ENCODE measurements at regions of chr12 and their contacts with region 1.

Region 1: GRCh38 chr12:22443379-22444316 is 100.7 kb downstream of the C2CD5 start:
- DNase-seq: peak; percentile 75
- ATAC-seq: peak; percentile 100
- H3K4me3 ChIP-seq: no peak overlapping the region
- H3K27ac ChIP-seq: no peak overlapping the region
- H3K4me1 ChIP-seq: no peaks in the 10 kb centered on the region
- H3K27me3 ChIP-seq: no peaks in the 10 kb centered on the region
- CTCF ChIP-seq: peak; percentile 77 to 85 (median 82)
- POLR2A ChIP-seq: no peak
- RAD21 ChIP-seq: peak; percentile 90

Region 2: DNA sequence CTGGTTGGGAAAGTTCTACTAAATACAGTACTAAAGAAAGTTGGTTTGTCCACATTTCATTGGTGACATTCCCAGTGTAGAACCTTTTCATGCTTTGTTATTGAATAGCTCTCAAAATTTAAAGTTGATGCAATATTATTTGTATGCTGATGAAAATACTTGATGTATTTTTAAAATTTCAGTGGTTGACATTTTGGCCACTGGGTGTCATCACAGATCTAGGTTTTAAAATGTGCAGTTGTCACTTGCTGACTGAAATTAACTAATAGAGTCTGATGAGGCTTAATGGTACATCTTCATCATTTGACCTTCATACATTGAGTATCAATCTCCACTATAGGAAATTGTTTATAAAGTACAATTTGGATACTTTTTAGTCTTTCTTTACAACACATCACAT is 360.5 kb before region 1 on chr12:
- CTCF ChIA-PET with region 1: interaction called, 12 read pairs
- POLR2A ChIA-PET with region 1: no interaction called
- RAD21 ChIA-PET with region 1: no interaction called
- intact Hi-C with region 1: loop called (anchors 1 kb)
- DNase-seq: peak; percentile 12
- ATAC-seq: peak; percentile 44; the same call in 1 of the 2 replicates
- H3K4me3 ChIP-seq: no peak overlapping the region
- H3K27ac ChIP-seq: no peak overlapping the region
- H3K4me1 ChIP-seq: no peaks in the 10 kb centered on the region
- H3K27me3 ChIP-seq: no peaks in the 10 kb centered on the region
- CTCF ChIP-seq: peak; percentile 13 to 59 (median 42); a peak in 4 of 6 replicates
- POLR2A ChIP-seq: no peak
- RAD21 ChIP-seq: peak; percentile 72

Region 3: GRCh38 chr12:22100958-22101748 is 342.5 kb before region 1 on chr12:
- CTCF ChIA-PET with region 1: interaction called, 13 read pairs
- POLR2A ChIA-PET with region 1: no interaction called
- RAD21 ChIA-PET with region 1: interaction called in 1 of 2 experiments, 3 read pairs
- intact Hi-C with region 1: loop called (anchors 1 kb)
- DNase-seq: peak; percentile 18
- ATAC-seq: peak; percentile 76
- H3K4me3 ChIP-seq: no peak overlapping the region
- H3K27ac ChIP-seq: no peak overlapping the region
- H3K4me1 ChIP-seq: no peaks in the 10 kb centered on the region
- H3K27me3 ChIP-seq: no peaks in the 10 kb centered on the region
- CTCF ChIP-seq: peak in 2 of 3 experiments; percentile 57 to 66; a peak in 4 of 6 replicates
- POLR2A ChIP-seq: no peak
- RAD21 ChIP-seq: peak; percentile 60

Region 4: GRCh38 chr12:22481547-22482104 is 38.0 kb after region 1 on chr12:
- CTCF ChIA-PET with region 1: no interaction called
- POLR2A ChIA-PET with region 1: no interaction called
- RAD21 ChIA-PET with region 1: no interaction called
- intact Hi-C with region 1: no loop called
- DNase-seq: no peak
- ATAC-seq: no peak
- H3K4me3 ChIP-seq: no peak overlapping the region
- H3K27ac ChIP-seq: no peak overlapping the region
- H3K4me1 ChIP-seq: no peaks in the 10 kb centered on the region
- H3K27me3 ChIP-seq: no peaks in the 10 kb centered on the region
- CTCF ChIP-seq: no peak
- POLR2A ChIP-seq: no peak
- RAD21 ChIP-seq: no peak

Region 5: DNA sequence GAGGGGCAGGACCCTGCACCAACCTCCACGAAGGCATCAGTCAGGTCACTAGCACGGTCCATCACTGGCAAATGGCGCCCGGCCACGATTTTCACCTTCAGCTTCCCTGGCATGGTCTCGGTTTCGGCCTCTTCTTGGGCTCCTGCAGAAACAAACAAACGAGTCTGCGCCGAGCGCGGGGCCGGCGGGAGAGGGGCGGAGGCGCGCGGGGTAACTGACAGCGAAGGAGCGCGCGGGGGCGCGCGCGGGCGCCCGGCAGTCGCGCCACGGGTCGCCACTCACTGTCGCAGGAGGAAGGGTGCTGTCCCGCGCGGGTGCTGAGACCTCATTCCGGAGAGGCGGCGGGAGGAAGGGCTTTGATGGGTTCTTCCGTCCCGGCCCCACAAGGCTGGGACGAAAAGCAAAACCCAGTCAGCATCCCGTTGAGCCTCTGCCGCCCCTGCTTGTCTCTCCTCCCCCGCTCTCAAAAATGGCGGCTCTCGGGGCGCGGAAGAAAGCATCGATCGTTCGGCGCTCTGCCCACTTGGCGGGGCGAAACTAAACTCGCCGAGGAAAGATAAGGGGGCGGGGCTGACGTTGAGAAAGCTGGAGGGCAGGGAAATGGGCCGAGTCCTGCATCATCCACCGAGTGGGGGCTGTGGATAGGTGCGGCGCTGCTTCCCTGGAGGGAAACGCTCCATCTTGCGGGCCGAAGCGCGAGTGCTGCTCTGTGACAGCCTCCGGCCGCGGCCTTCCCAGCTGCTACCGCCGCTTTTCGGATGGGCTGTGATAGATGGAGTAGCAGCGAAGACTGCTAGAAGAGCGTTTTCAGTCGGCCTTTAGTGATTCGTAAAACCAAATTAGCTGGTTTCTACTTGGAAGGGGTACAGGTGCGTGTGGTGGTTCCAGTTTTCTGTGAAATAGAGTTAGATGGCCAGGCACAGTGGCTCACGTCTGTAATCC is 100.7 kb after region 1 on chr12 and contains the start of gene C2CD5:
- CTCF ChIA-PET with region 1: no interaction called
- POLR2A ChIA-PET with region 1: no interaction called
- RAD21 ChIA-PET with region 1: no interaction called
- intact Hi-C with region 1: no loop called
- DNase-seq: peak; percentile 95
- ATAC-seq: peak; percentile 90
- H3K4me3 ChIP-seq: peak within 1 kb of the TSS; percentile 88 to 93
- H3K27ac ChIP-seq: peak within 1 kb of the TSS; percentile 86
- H3K4me1 ChIP-seq: peaks cover 3 to 18% of the 10 kb centered on the region in 2 experiments; a peak in 3 of 4 replicates
- H3K27me3 ChIP-seq: no peaks in the 10 kb centered on the region
- CTCF ChIP-seq: peak in 2 of 3 experiments; percentile 13 to 29; a peak in 2 of 6 replicates
- POLR2A ChIP-seq: no peak
- RAD21 ChIP-seq: no peak
- total RNA-seq, gene C2CD5: 22.9 TPM

Measured in HCT116 (cell line).